ENCODE measurements at regions of chr22 and their contacts with region 1.

Region 1: DNA sequence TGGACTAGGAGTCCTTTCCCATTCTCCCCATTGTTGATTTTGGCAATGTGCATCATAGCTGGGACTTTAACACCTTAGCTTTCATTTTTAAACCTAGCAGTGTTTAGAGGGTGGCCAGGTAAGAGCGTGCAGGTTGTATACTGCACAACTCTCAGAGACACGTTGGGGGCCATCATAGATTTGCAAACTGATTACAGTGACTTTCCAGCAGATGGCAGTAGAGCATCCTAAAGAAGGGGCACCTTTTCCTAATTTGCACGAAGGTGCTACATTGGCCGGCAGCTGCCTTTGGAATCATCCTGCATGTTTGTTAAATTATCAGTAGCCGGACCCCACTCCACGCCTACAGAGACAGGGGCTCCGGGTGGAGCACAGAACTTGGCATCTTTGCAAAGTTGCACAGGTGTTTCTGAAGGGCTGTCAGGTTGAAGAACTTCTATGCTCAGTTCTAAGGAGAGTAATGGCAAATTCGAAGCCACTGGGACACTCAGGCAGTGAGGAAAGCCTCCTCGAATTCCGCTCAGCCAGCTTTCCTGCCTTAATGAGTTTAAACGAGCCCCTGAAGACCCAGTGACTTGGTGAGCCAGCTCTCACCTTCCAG is 7.7 kb downstream of the LHFPL7 start:
- DNase-seq: peak; percentile 41 to 56 (median 45)
- ATAC-seq: peak; percentile 30
- H3K4me3 ChIP-seq: no peak overlapping the region
- H3K27ac ChIP-seq: peak overlapping the region in 1 of 4 donors; percentile 34
- H3K4me1 ChIP-seq: peaks cover 31% of the 10 kb centered on the region
- H3K27me3 ChIP-seq: no peaks in the 10 kb centered on the region
- CTCF ChIP-seq: peak; percentile 48 to 81 (median 76)
- POLR2A ChIP-seq: no peak

Region 2: DNA sequence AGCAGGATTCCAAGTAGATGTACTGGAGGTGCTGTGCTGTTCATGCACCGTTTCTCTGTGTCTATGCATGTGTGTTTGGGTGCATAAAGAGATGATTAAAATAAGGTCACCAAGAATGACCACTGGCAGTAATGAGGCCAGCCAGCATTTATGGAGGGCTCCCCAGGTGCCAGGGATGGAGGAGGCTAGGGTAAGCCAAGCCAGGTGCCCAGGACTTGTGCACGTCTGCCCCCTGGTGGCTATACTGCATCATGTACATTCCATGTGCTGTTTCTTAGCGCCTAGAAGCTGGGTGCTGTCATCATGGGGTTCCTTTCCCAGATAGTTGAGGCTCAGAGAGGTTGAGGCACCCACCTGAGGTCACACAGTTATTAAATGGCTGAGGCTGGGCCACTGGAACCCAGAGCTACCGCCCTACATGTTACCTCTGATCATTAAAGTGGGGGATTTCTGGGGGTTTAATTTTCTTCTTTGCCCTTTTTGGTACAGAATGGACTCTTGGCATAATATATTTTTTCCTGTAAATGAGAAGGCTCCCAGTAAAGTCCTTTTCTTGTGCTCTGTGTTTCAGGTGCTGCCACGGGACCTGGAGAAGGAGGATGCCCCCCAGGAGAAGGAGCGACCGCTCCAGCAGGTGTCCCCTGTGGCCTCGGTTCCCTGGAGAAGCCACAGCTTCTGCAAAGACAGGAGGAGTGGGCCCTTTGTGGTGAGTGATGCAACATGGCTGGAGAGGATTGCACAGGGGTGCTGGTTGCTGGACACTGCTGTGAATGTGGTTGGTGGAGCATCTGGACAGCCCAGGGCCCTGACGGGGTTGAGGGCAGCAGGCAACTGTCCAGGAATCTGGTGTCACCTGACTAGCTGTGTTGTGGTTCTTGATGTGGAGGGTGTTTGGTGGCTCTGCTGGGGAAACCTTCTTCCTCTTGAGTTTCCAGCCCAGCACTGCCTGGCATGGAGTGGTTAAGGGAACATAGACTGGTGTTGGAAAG is 110.1 kb after region 1 on chr22:
- intact Hi-C with region 1: loop called (anchors 5 kb)
- DNase-seq: peak; percentile 71 to 78 (median 77)
- ATAC-seq: peak; percentile 72
- H3K4me3 ChIP-seq: no peak overlapping the region
- H3K27ac ChIP-seq: no peak overlapping the region
- H3K4me1 ChIP-seq: peaks cover 23% of the 10 kb centered on the region
- H3K27me3 ChIP-seq: no peaks in the 10 kb centered on the region
- CTCF ChIP-seq: peak; percentile 75 to 90 (median 83)
- POLR2A ChIP-seq: no peak

Measured in body of pancreas (tissue), 4 donors.